Heart left ventricle (tissue), 16 donors: ENCODE measurements at regions of chr16 and their contacts with region 1.

Region 1: DNA sequence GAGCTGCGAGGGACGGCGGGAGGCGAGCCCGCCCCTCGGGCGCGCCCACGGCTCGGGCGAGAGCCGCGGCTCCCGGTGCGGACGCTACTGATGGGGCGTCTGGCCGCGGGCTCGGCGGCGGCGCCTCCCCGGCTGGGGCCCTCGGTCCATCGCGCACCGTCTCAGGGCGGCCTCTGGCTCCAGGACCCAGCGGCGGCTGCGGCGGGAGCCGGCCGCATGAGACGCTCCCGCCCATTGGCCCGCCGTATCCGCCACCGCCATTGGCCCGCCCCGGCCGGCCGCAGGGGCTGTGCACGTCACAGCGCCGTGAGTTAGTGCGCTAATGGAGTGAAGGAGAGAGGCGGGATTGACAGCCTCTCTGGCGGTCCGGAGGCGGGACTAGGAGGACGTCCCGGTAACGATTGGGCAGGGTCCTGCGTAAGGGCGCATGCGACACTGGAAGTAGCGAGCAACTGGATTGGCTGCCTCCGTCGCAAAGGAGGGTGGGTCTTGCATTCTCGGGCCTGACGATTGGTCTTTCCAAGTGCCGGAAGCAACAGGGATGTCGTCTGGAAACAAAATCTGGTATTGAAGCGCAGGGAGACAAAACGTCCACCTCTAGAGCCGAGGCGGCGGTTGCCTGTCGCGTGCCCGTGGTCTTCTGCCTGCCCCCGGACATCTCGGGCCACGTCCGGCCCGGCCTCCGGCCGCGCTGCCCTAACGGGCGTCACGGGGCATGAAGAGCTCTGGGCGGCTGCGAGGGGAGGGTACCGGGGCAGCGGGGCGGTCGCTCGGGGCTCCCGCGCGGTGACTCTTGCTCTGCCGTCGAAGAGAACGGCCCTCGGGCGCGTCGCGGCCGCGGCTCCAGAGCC is at the start of gene ANKRD11:
- DNase-seq: peak; percentile 99 to 100 (median 99)
- ATAC-seq: peak; percentile 96 to 100 (median 99)
- H3K4me3 ChIP-seq: peak within 1 kb of the TSS; percentile 73 to 100 (median 89)
- H3K27ac ChIP-seq: peak within 1 kb of the TSS; percentile 92 to 98 (median 95)
- H3K4me1 ChIP-seq: peaks cover 4 to 49% (median 42%) of the 10 kb centered on the region in 12 donors
- H3K27me3 ChIP-seq: no peaks in the 10 kb centered on the region
- CTCF ChIP-seq: peak in 1 of 12 donors; percentile 7
- POLR2A ChIP-seq: peak; percentile 63 to 85
- total RNA-seq, gene ANKRD11: 53.6 to 123 (median 67.7) TPM

Region 2: DNA sequence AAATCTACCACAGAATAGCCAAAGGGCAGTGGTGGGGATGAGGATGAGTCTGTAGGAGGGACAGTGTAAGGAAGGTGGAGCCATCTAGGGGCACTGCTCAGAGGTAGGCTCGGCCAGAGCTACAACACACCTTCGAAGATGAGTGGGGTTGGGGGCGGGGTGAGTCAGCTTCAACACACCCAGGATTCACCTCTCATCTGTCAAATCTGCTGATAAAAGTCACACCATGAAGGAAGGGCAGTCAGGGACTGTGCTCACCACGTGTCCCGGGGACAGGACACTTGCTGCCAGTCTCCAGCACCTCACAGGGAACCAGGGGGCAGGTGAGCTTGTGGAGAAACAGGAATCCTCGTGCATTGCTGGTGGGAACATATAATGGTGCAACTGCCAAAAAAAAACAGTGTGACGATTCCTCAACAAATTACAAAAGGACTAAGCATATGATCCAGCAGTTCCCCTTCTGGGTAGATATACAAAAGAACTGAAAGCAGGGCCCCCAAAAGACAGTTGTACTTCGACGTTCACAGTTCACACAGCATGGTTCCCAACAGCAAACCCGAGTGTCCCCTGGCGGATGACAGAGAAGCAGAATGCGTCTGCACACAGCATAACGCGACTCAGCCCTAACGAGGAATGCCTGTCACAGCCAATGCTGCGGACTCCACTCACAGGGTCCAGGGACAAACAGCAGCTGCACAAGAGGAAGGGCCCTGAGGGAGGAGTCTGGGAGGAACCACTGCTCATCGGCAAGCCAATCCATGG is 133.4 kb before region 1 on chr16:
- intact Hi-C with region 1: loop called in 1 of 10 experiments (anchors 5 kb)
- DNase-seq: peak in 3 of 5 donors; percentile 55 to 73 (median 68)
- ATAC-seq: peak; percentile 46 to 68 (median 61)
- H3K4me3 ChIP-seq: peak overlapping the region in 1 of 12 donors; percentile 8
- H3K27ac ChIP-seq: peak overlapping the region in 4 of 12 donors; percentile 4 to 59 (median 20)
- H3K4me1 ChIP-seq: peaks cover 7 to 98% (median 92%) of the 10 kb centered on the region in 12 donors
- H3K27me3 ChIP-seq: no peaks in the 10 kb centered on the region
- CTCF ChIP-seq: peak in 5 of 12 donors; percentile 7 to 30 (median 19)
- POLR2A ChIP-seq: no peak

Region 3: GRCh38 chr16:89383082-89384003 is 107.3 kb before region 1 on chr16:
- intact Hi-C with region 1: loop called in 1 of 10 experiments (anchors 10 kb)
- DNase-seq: peak in 4 of 5 donors; percentile 52 to 66 (median 58)
- ATAC-seq: peak; percentile 52 to 85 (median 79)
- H3K4me3 ChIP-seq: no peak overlapping the region
- H3K27ac ChIP-seq: peak overlapping the region in 4 of 12 donors; percentile 11 to 40 (median 26)
- H3K4me1 ChIP-seq: peaks cover 7 to 85% (median 56%) of the 10 kb centered on the region in 12 donors
- H3K27me3 ChIP-seq: no peaks in the 10 kb centered on the region
- CTCF ChIP-seq: no peak
- POLR2A ChIP-seq: no peak

Region 4: DNA sequence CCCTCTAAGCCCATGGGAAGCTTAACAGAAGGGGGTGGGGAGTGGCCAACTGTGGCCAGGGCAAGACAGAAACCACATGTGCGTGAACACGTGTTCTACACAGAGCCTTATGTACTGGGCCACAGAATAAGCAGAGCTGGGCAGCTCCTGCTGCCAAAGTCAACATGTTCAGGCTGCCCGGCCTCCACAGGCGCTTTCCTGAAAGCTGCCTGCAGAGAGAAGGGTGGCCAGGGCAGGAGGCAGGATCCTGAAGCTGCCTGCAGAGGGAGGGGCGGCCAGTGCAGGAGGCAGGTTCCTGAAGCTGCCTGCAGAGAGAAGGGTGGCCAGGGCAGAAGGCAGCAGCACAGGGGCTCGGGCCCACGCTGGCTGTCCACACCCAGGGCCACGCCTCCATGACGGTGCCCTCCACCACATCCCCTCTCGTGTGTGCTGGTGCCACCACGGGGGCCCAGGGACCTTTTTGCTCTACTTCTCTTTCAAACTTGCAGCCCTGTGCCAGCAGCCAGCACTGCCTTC is 79.8 kb before region 1 on chr16:
- intact Hi-C with region 1: loop called in 3 of 10 experiments (anchors 5 to 10 kb)
- DNase-seq: peak; percentile 55 to 75 (median 65)
- ATAC-seq: peak; percentile 71 to 83 (median 78)
- H3K4me3 ChIP-seq: no peak overlapping the region
- H3K27ac ChIP-seq: peak overlapping the region in 4 of 12 donors; percentile 5 to 49 (median 38)
- H3K4me1 ChIP-seq: peaks cover 20 to 94% (median 84%) of the 10 kb centered on the region in 12 donors
- H3K27me3 ChIP-seq: no peaks in the 10 kb centered on the region
- CTCF ChIP-seq: peak in 3 of 12 donors; percentile 12 to 33 (median 18)
- POLR2A ChIP-seq: no peak

Region 5: DNA sequence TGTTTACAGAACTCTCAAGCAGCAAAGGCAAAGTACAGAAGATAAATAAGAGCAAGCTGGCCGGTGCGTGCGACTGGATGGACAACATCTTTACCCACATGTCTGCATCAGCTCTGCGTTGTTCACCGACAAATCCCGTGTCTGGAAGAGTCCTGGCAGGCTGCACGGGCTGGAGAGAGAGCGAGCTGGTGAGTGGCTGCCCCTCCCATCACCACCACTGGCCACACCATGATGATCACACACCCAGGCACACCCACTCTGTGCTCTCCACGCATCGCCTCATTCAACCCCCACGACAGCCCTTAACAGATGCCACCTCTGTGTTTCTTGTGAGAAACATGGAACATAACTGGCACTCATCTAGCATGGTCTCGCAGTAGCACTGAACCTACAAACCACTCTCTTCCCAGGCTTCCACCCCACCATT is 59.4 kb before region 1 on chr16:
- intact Hi-C with region 1: loop called in 1 of 10 experiments (anchors 10 kb)
- DNase-seq: no peak
- ATAC-seq: peak; percentile 56 to 79 (median 72)
- H3K4me3 ChIP-seq: no peak overlapping the region
- H3K27ac ChIP-seq: no peak overlapping the region
- H3K4me1 ChIP-seq: peaks cover 0 to 62% (median 40%) of the 10 kb centered on the region in 12 donors
- H3K27me3 ChIP-seq: no peaks in the 10 kb centered on the region
- CTCF ChIP-seq: no peak
- POLR2A ChIP-seq: no peak

Region 6: DNA sequence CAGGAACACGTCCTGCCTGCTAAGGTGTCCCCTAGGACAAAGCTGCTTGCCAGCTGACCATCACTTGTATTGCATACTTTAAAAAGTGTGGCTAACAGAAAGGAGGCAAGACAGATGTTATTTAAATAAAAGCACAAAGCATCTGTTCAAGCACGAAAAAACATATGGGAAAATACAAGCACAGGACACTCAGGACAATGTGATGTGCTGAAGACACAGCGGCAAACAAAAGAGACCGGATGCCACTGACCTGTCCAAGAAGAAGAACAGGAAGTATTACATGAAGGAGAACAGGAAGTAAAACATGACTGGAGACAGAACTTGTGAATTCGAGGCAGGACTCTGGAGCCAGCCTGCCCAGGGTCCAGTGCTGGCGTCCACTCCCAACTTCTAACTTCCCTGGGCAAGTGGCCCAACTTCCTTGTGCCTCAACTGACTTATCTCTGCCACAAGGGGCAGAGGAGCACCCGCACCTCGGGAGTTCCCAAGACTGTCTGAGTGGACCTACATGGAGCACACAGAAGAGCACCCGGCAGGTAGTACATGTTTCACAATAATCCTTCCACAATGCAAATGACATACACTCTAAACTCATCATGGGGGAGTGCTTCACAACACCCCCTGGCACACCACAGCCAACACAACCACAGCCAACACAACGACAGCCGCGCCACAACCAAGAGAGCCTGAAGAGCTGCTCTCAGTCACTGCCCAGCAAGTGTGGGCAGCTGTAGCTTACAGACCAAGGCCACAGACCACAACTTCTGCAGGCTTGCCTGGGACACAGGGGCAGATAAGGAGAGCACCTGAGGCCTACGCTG is 36.9 kb before region 1 on chr16:
- intact Hi-C with region 1: loop called in 1 of 10 experiments (anchors 5 kb)
- DNase-seq: peak in 3 of 5 donors; percentile 28 to 60 (median 46)
- ATAC-seq: peak; percentile 47 to 73 (median 56)
- H3K4me3 ChIP-seq: no peak overlapping the region
- H3K27ac ChIP-seq: peak overlapping the region in 4 of 12 donors; percentile 11 to 65 (median 13)
- H3K4me1 ChIP-seq: peaks cover 7 to 81% (median 52%) of the 10 kb centered on the region in 12 donors
- H3K27me3 ChIP-seq: no peaks in the 10 kb centered on the region
- CTCF ChIP-seq: peak in 8 of 12 donors; percentile 11 to 46 (median 31)
- POLR2A ChIP-seq: no peak

Region 7: DNA sequence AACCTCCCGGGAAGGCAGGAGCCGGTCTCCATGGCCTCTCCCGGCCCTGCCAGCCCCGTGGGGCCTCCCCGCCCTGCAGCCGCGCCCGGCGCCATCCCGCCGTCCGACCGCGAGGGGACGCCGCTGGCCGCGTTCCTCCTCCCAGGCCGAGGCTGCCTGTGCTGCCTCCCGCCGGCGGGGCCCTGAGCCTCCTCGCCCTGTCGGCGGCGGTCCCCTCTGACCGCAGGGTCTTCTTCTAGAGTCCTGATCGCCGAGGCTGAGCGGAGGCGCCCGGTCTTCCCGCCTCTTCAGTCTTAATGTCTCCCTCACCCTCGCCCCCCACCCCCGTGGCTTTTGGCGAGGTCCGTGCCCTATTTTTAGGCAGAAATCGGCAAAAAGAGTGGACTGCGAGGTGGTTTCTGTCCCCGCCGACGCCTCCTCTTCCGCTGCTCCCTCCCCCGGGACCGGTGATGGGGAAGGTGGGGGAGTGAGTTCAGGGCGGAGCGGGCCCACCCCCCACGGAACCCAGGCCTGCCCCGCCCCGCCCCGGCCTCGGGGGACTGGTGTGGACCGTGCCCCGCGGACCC is 84.2 kb after region 1 on chr16:
- intact Hi-C with region 1: no loop called
- DNase-seq: peak in 1 of 5 donors; percentile 46
- ATAC-seq: peak in 3 of 4 donors; percentile 52 to 80 (median 67)
- H3K4me3 ChIP-seq: peak overlapping the region; percentile 13 to 48 (median 34)
- H3K27ac ChIP-seq: no peak overlapping the region
- H3K4me1 ChIP-seq: peaks cover 4 to 27% (median 14%) of the 10 kb centered on the region in 12 donors
- H3K27me3 ChIP-seq: peaks cover 26 to 70% (median 39%) of the 10 kb centered on the region in 9 donors
- CTCF ChIP-seq: peak; percentile 22 to 75 (median 57)
- POLR2A ChIP-seq: no peak

Region 8: GRCh38 chr16:89931305-89931896 is 440.8 kb after region 1 on chr16:
- intact Hi-C with region 1: no loop called
- DNase-seq: no peak
- ATAC-seq: no peak
- H3K4me3 ChIP-seq: no peak overlapping the region
- H3K27ac ChIP-seq: no peak overlapping the region
- H3K4me1 ChIP-seq: peaks cover 0 to 4% (median 0%) of the 10 kb centered on the region in 12 donors
- H3K27me3 ChIP-seq: peaks cover 0 to 1% (median 0%) of the 10 kb centered on the region in 9 donors
- CTCF ChIP-seq: no peak
- POLR2A ChIP-seq: no peak